PC-3 (cell line): ENCODE measurements at regions of chr7 and their contacts with region 1.

Region 1: GRCh38 chr7:124765401-124766352 is at the start of gene GPR37:
- DNase-seq: peak; percentile 86
- ATAC-seq: peak; percentile 88
- H3K4me3 ChIP-seq: peak within 1 kb of the TSS; percentile 92
- H3K27ac ChIP-seq: peak within 1 kb of the TSS; percentile 75
- H3K4me1 ChIP-seq: peaks cover 22% of the 10 kb centered on the region; the same call in 1 of the 2 replicates
- H3K27me3 ChIP-seq: no peaks in the 10 kb centered on the region
- CTCF ChIP-seq: peak; percentile 42
- total RNA-seq, gene GPR37: 10.5 and 14.3 TPM in 2 replicates

Region 2: GRCh38 chr7:124322561-124322960 is 443.1 kb before region 1 on chr7:
- CTCF ChIA-PET with region 1: interaction called, 11 read pairs
- POLR2A ChIA-PET with region 1: no interaction called
- intact Hi-C with region 1: loop called (anchors 1 kb)
- DNase-seq: peak; percentile 62
- ATAC-seq: peak; percentile 29; the same call in 1 of the 2 replicates
- H3K4me3 ChIP-seq: no peak overlapping the region
- H3K27ac ChIP-seq: no peak overlapping the region
- H3K4me1 ChIP-seq: peaks cover 47% of the 10 kb centered on the region
- H3K27me3 ChIP-seq: no peaks in the 10 kb centered on the region
- CTCF ChIP-seq: no peak

Region 3: GRCh38 chr7:124480036-124480820 is 285.4 kb before region 1 on chr7:
- CTCF ChIA-PET with region 1: interaction called, 7 read pairs
- POLR2A ChIA-PET with region 1: no interaction called
- intact Hi-C with region 1: loop called (anchors 5 kb)
- DNase-seq: no peak
- ATAC-seq: no peak
- H3K4me3 ChIP-seq: no peak overlapping the region
- H3K27ac ChIP-seq: no peak overlapping the region
- H3K4me1 ChIP-seq: peaks cover 16% of the 10 kb centered on the region
- H3K27me3 ChIP-seq: no peaks in the 10 kb centered on the region
- CTCF ChIP-seq: no peak

Region 4: DNA sequence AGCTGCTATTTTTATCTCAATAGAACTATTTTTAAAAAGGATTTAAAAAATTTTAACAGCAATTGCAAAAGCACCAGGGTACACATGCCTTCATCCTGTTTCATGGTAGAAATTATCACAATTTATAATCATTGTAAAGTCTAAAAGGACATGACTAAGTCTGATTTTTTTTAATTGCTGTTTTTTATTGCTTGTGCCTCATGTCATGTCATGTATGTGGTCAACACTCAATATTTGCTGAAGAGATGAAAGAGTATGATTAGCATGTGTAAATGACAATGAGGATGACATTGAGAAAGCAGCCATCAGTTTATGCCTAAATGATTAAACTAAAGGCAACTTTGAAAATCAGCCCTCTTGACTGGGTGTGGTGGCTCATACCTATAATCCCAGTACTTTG is 74.8 kb before region 1 on chr7:
- CTCF ChIA-PET with region 1: interaction called, 3 read pairs
- POLR2A ChIA-PET with region 1: no interaction called
- intact Hi-C with region 1: loop called (anchors 2 kb)
- DNase-seq: peak; percentile 85
- ATAC-seq: peak; percentile 93
- H3K4me3 ChIP-seq: no peak overlapping the region
- H3K27ac ChIP-seq: peak overlapping the region; percentile 50
- H3K4me1 ChIP-seq: peaks cover 11% of the 10 kb centered on the region; the same call in 1 of the 2 replicates
- H3K27me3 ChIP-seq: no peaks in the 10 kb centered on the region
- CTCF ChIP-seq: no peak

Region 5: GRCh38 chr7:125090596-125090995 is 324.9 kb after region 1 on chr7:
- CTCF ChIA-PET with region 1: no interaction called
- POLR2A ChIA-PET with region 1: no interaction called
- intact Hi-C with region 1: no loop called
- DNase-seq: peak; percentile 6
- ATAC-seq: no peak
- H3K4me3 ChIP-seq: no peak overlapping the region
- H3K27ac ChIP-seq: no peak overlapping the region
- H3K4me1 ChIP-seq: no peaks in the 10 kb centered on the region
- H3K27me3 ChIP-seq: no peaks in the 10 kb centered on the region
- CTCF ChIP-seq: no peak

Region 6: DNA sequence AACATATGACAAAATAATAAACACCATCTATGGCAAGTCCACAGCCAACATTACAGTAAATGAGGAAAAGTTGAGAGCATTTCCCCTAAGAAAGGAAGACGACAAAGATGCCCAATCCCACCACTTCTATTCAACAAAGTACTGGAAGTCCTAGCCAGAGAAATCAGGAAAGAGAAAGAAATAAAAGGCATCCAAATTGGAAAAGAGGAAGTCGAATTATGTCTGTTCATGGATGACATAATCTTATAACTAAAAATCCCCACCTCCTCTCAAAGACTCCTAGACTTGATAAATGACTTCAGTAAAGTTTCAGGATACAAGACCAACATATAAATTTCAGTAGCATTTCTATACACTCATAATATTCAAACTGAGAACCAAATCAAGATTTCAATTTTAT is 452.4 kb after region 1 on chr7:
- CTCF ChIA-PET with region 1: no interaction called
- POLR2A ChIA-PET with region 1: no interaction called
- intact Hi-C with region 1: no loop called
- DNase-seq: no peak
- ATAC-seq: no peak
- H3K4me3 ChIP-seq: no peak overlapping the region
- H3K27ac ChIP-seq: no peak overlapping the region
- H3K4me1 ChIP-seq: no peaks in the 10 kb centered on the region
- H3K27me3 ChIP-seq: no peaks in the 10 kb centered on the region
- CTCF ChIP-seq: no peak